Activated B cell treated with CpG ODN at 0.5 μM for 24 hours (primary cell): ENCODE measurements at regions of chr7 and their contacts with region 1.

Region 1: GRCh38 chr7:18345641-18346234 is 149.8 kb upstream of the HDAC9 start:
- DNase-seq: no peak
- ATAC-seq: peak; percentile 60
- H3K4me3 Mint-ChIP-seq: no peak overlapping the region
- H3K27ac Mint-ChIP-seq: no peak overlapping the region
- H3K4me1 Mint-ChIP-seq: peaks cover 47% of the 10 kb centered on the region
- H3K27me3 Mint-ChIP-seq: no peaks in the 10 kb centered on the region
- CTCF ChIP-seq: peak; percentile 62

Region 2: GRCh38 chr7:16891338-16891737 is 1454.4 kb before region 1 on chr7:
- CTCF ChIA-PET with region 1: interaction called, 3 read pairs
- POLR2A ChIA-PET with region 1: no interaction called
- intact Hi-C with region 1: loop called (anchors 5 kb)
- DNase-seq: no peak
- ATAC-seq: peak; percentile 45
- H3K4me3 Mint-ChIP-seq: no peak overlapping the region
- H3K27ac Mint-ChIP-seq: no peak overlapping the region
- H3K4me1 Mint-ChIP-seq: peaks cover 4% of the 10 kb centered on the region
- H3K27me3 Mint-ChIP-seq: no peaks in the 10 kb centered on the region
- CTCF ChIP-seq: no peak

Region 3: DNA sequence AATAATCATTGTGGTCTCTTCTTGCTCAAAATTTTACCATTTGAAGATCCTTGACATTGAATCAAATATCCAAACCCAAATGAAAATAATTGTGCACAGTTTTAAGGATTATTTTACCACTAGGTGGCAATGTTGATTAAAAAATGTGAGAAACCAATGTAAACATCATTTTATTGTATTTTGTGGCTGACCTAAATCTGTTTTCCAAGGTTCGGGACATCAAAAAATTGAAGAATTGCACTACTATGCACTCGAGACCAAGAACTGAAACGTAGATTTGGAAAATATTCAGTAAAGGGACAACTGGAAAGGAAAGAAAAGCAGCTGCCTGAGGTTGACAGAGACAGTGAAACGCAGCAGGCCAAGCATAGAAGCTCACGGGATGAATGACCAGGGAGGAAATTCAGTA is 664.8 kb before region 1 on chr7:
- CTCF ChIA-PET with region 1: interaction called, 22 read pairs
- POLR2A ChIA-PET with region 1: no interaction called
- intact Hi-C with region 1: loop called (anchors 1 kb)
- DNase-seq: no peak
- ATAC-seq: no peak
- H3K4me3 Mint-ChIP-seq: no peak overlapping the region
- H3K27ac Mint-ChIP-seq: no peak overlapping the region
- H3K4me1 Mint-ChIP-seq: no peaks in the 10 kb centered on the region
- H3K27me3 Mint-ChIP-seq: no peaks in the 10 kb centered on the region
- CTCF ChIP-seq: no peak

Region 4: GRCh38 chr7:17769918-17770317 is 575.8 kb before region 1 on chr7:
- CTCF ChIA-PET with region 1: interaction called, 24 read pairs
- POLR2A ChIA-PET with region 1: no interaction called
- intact Hi-C with region 1: loop called (anchors 1 kb)
- DNase-seq: no peak
- ATAC-seq: peak; percentile 75
- H3K4me3 Mint-ChIP-seq: no peak overlapping the region
- H3K27ac Mint-ChIP-seq: no peak overlapping the region
- H3K4me1 Mint-ChIP-seq: peaks cover 11% of the 10 kb centered on the region
- H3K27me3 Mint-ChIP-seq: no peaks in the 10 kb centered on the region
- CTCF ChIP-seq: no peak

Region 5: GRCh38 chr7:18064242-18064838 is 281.4 kb before region 1 on chr7:
- CTCF ChIA-PET with region 1: interaction called, 5 read pairs
- POLR2A ChIA-PET with region 1: no interaction called
- intact Hi-C with region 1: loop called (anchors 1 kb)
- DNase-seq: no peak
- ATAC-seq: no peak
- H3K4me3 Mint-ChIP-seq: no peak overlapping the region
- H3K27ac Mint-ChIP-seq: no peak overlapping the region
- H3K4me1 Mint-ChIP-seq: no peaks in the 10 kb centered on the region
- H3K27me3 Mint-ChIP-seq: no peaks in the 10 kb centered on the region
- CTCF ChIP-seq: no peak

Region 6: GRCh38 chr7:18295781-18296423 is 49.8 kb before region 1 on chr7:
- CTCF ChIA-PET with region 1: interaction called, 3 read pairs
- POLR2A ChIA-PET with region 1: no interaction called
- intact Hi-C with region 1: loop called (anchors 2 kb)
- DNase-seq: no peak
- ATAC-seq: peak; percentile 56
- H3K4me3 Mint-ChIP-seq: peak overlapping the region; percentile 48
- H3K27ac Mint-ChIP-seq: peak overlapping the region; percentile 72
- H3K4me1 Mint-ChIP-seq: peaks cover 70% of the 10 kb centered on the region
- H3K27me3 Mint-ChIP-seq: no peaks in the 10 kb centered on the region
- CTCF ChIP-seq: no peak